Endothelial cell of umbilical vein (primary cell): ENCODE measurements at regions of chr12 and their contacts with region 1.

Region 1: GRCh38 chr12:89949457-89950195 is 241.0 kb upstream of the ATP2B1 start:
- DNase-seq: peak; percentile 98
- H3K4me3 ChIP-seq: no peak overlapping the region
- H3K27ac ChIP-seq: peak overlapping the region; percentile 99
- H3K4me1 ChIP-seq: peaks cover 33% of the 10 kb centered on the region
- H3K27me3 ChIP-seq: no peaks in the 10 kb centered on the region
- CTCF ChIP-seq: peak; percentile 21 to 36
- POLR2A ChIP-seq: no peak

Region 2: DNA sequence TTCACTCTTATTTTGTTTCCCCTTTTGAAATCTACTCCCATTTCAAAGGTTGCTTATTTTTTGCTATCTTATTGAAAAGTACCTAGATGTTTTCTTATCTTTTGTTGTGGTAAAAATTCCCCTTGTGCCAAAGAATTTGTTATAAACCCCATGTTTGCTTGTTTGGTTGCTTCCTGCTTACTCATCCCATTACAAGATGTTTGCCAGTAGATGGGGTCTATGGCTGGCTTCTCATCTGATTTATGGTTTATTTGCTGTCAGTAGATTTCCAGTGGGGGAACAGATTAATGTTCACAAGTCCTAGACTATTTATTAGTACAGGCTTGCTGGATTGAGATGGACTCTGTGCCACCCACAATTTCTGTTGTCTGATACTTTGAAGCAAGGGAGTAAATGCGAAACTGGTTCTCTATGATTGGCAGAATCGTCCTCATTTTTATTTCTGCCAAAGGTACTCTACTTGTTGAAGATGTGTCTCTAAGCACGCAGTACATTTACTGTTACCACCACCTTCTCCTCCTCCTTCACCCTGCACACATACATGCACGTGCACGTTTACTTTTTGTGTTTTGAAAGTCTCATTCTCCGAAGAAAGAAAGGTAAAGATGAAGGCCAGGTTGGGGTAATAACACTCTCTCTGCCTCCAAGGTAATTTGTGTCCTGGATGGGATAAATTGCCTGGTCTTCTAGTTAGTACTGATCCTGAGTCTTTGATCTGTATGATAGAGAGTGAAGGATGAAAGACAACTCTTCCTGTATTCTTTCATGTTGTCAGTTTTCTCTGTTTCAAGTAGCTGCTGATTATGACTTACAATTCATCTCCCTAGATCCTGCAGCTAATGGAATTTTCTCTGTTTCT is 123.8 kb before region 1 on chr12:
- CTCF ChIA-PET with region 1: no interaction called
- POLR2A ChIA-PET with region 1: no interaction called
- dilution Hi-C with region 1: no loop called
- intact Hi-C with region 1: loop called (anchors 5 kb)
- DNase-seq: peak; percentile 69
- H3K4me3 ChIP-seq: no peak overlapping the region
- H3K27ac ChIP-seq: no peak overlapping the region
- H3K4me1 ChIP-seq: no peaks in the 10 kb centered on the region
- H3K27me3 ChIP-seq: no peaks in the 10 kb centered on the region
- CTCF ChIP-seq: no peak
- POLR2A ChIP-seq: no peak

Region 3: GRCh38 chr12:89862511-89863179 is 87.0 kb before region 1 on chr12:
- CTCF ChIA-PET with region 1: no interaction called
- POLR2A ChIA-PET with region 1: no interaction called
- dilution Hi-C with region 1: no loop called
- intact Hi-C with region 1: loop called (anchors 2 kb)
- DNase-seq: peak; percentile 61
- H3K4me3 ChIP-seq: no peak overlapping the region
- H3K27ac ChIP-seq: peak overlapping the region; percentile 40
- H3K4me1 ChIP-seq: peaks cover 18% of the 10 kb centered on the region
- H3K27me3 ChIP-seq: no peaks in the 10 kb centered on the region
- CTCF ChIP-seq: no peak
- POLR2A ChIP-seq: no peak

Region 4: GRCh38 chr12:90064852-90065801 is 115.5 kb after region 1 on chr12:
- CTCF ChIA-PET with region 1: interaction called, 3 read pairs
- POLR2A ChIA-PET with region 1: no interaction called
- dilution Hi-C with region 1: no loop called
- intact Hi-C with region 1: loop called (anchors 2 kb)
- DNase-seq: peak; percentile 83
- H3K4me3 ChIP-seq: no peak overlapping the region
- H3K27ac ChIP-seq: no peak overlapping the region
- H3K4me1 ChIP-seq: peaks cover 10% of the 10 kb centered on the region
- H3K27me3 ChIP-seq: no peaks in the 10 kb centered on the region
- CTCF ChIP-seq: no peak
- POLR2A ChIP-seq: no peak

Region 5: DNA sequence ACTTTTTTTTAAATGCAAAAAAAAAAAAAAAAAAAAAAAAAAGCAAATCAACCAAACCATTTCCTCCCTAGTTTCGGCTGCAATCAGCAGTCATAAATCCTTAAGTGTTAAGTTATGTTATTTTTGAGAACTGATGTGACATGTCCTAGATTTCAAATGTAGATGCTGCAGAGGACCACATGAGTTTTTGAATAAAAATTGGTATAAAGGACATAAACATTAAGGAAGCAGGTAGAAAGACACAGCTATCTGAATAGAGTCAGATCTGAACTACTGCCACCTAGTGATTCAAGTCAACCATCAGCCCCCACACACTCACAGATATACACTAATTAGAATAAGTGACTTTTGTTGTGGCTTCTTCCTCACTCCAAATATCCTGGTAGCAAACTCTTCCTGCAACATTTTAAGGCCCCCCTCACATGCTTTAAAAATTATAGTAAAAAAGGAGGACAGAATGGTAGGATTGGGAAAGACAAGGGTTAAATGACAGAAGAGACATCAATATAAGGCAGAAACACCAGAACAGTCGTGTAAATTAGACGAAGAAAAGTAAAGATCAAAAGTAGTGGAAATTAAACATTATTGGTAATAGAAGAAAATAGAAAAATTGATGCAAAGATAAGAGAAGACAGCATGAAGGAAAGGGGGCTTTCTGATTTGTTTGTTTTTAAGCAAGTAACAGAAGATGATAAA is 153.5 kb after region 1 on chr12:
- CTCF ChIA-PET with region 1: interaction called, 6 read pairs
- POLR2A ChIA-PET with region 1: no interaction called
- dilution Hi-C with region 1: no loop called
- intact Hi-C with region 1: loop called (anchors 5 kb)
- DNase-seq: peak; percentile 63
- H3K4me3 ChIP-seq: no peak overlapping the region
- H3K27ac ChIP-seq: no peak overlapping the region
- H3K4me1 ChIP-seq: no peaks in the 10 kb centered on the region
- H3K27me3 ChIP-seq: no peaks in the 10 kb centered on the region
- CTCF ChIP-seq: peak; percentile 34 to 54
- POLR2A ChIP-seq: no peak

Region 6: DNA sequence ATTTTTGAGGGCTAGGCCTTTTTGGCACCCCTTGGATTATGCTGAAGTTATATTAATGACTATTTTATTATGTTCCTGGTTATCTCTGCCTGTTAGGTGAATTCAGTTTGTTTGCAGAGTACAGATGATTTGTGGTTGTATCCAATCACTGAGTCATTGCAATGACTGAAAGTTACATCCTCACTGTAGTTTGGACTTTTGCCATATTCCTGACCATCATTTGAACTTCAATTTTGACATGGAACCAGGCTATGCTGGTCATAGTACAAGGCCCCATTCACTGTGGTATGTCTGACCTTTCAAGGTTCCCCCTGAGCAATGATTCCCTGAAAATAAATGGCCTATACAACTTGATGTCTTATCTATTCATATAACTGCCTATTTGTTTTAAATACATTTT is 384.3 kb after region 1 on chr12:
- CTCF ChIA-PET with region 1: no interaction called
- POLR2A ChIA-PET with region 1: no interaction called
- dilution Hi-C with region 1: no loop called
- intact Hi-C with region 1: loop called (anchors 2 kb)
- DNase-seq: peak; percentile 53
- H3K4me3 ChIP-seq: no peak overlapping the region
- H3K27ac ChIP-seq: no peak overlapping the region
- H3K4me1 ChIP-seq: peaks cover 40% of the 10 kb centered on the region
- H3K27me3 ChIP-seq: no peaks in the 10 kb centered on the region
- CTCF ChIP-seq: no peak
- POLR2A ChIP-seq: no peak

Region 7: GRCh38 chr12:90543374-90543773 is 593.7 kb after region 1 on chr12:
- CTCF ChIA-PET with region 1: no interaction called
- POLR2A ChIA-PET with region 1: no interaction called
- dilution Hi-C with region 1: no loop called
- intact Hi-C with region 1: loop called (anchors 5 kb)
- DNase-seq: peak; percentile 93
- H3K4me3 ChIP-seq: no peak overlapping the region
- H3K27ac ChIP-seq: peak overlapping the region; percentile 97
- H3K4me1 ChIP-seq: peaks cover 18% of the 10 kb centered on the region
- H3K27me3 ChIP-seq: no peaks in the 10 kb centered on the region
- CTCF ChIP-seq: no peak
- POLR2A ChIP-seq: peak; percentile 55